GM12878 (cell line): ENCODE measurements at regions of chr10 and their contacts with region 1.

Region 1: GRCh38 chr10:62610649-62611229 is 193.8 kb upstream of the ADO start:
- DNase-seq: no peak
- ATAC-seq: peak; percentile 90
- H3K4me3 ChIP-seq: no peak overlapping the region
- H3K27ac ChIP-seq: no peak overlapping the region
- H3K4me1 ChIP-seq: peaks cover 30% of the 10 kb centered on the region
- H3K27me3 ChIP-seq: no peaks in the 10 kb centered on the region
- CTCF ChIP-seq: peak; percentile 90 to 99 (median 96)
- EP300 ChIP-seq: 0 out of 4 replicates have a peak, but pooled peaks have one; percentile 7 to 30
- POLR2A ChIP-seq: no peak
- RAD21 ChIP-seq: peak; percentile 99

Region 2: GRCh38 chr10:61708846-61709245 is 901.9 kb before region 1 on chr10:
- CTCF ChIA-PET with region 1: no interaction called
- POLR2A ChIA-PET with region 1: no interaction called
- RAD21 ChIA-PET with region 1: no interaction called
- SMC1A ChIA-PET with region 1: no interaction called
- in situ Hi-C with region 1: no loop called
- intact Hi-C with region 1: no loop called
- DNase-seq: no peak
- ATAC-seq: no peak
- H3K4me3 ChIP-seq: no peak overlapping the region
- H3K27ac ChIP-seq: no peak overlapping the region
- H3K4me1 ChIP-seq: no peaks in the 10 kb centered on the region
- H3K27me3 ChIP-seq: no peaks in the 10 kb centered on the region
- CTCF ChIP-seq: no peak
- EP300 ChIP-seq: no peak
- POLR2A ChIP-seq: no peak
- RAD21 ChIP-seq: no peak

Region 3: DNA sequence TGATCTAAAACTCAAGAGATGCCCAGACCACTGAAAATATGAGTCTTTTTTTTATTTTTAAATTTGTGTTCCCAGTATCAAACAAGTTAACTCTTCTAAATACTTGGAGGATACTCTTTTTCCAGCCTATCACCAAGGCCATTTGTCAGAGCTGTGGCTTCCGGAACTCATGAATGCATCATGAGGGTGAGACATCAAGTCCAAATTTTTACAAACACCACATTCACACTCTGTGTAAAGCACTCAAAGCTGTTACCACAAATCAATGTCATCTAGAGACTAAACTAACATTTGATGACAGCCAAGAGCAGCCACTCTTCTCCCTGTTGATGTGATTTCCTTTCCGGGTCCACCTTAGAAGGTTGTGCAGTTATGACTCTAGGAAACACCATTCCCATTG is 753.0 kb before region 1 on chr10:
- CTCF ChIA-PET with region 1: no interaction called
- POLR2A ChIA-PET with region 1: no interaction called
- RAD21 ChIA-PET with region 1: no interaction called
- SMC1A ChIA-PET with region 1: no interaction called
- in situ Hi-C with region 1: no loop called
- intact Hi-C with region 1: no loop called
- DNase-seq: no peak
- ATAC-seq: no peak
- H3K4me3 ChIP-seq: no peak overlapping the region
- H3K27ac ChIP-seq: no peak overlapping the region
- H3K4me1 ChIP-seq: no peaks in the 10 kb centered on the region
- H3K27me3 ChIP-seq: no peaks in the 10 kb centered on the region; a peak in 1 of 4 replicates
- CTCF ChIP-seq: no peak
- EP300 ChIP-seq: no peak
- POLR2A ChIP-seq: no peak
- RAD21 ChIP-seq: no peak

Region 4: DNA sequence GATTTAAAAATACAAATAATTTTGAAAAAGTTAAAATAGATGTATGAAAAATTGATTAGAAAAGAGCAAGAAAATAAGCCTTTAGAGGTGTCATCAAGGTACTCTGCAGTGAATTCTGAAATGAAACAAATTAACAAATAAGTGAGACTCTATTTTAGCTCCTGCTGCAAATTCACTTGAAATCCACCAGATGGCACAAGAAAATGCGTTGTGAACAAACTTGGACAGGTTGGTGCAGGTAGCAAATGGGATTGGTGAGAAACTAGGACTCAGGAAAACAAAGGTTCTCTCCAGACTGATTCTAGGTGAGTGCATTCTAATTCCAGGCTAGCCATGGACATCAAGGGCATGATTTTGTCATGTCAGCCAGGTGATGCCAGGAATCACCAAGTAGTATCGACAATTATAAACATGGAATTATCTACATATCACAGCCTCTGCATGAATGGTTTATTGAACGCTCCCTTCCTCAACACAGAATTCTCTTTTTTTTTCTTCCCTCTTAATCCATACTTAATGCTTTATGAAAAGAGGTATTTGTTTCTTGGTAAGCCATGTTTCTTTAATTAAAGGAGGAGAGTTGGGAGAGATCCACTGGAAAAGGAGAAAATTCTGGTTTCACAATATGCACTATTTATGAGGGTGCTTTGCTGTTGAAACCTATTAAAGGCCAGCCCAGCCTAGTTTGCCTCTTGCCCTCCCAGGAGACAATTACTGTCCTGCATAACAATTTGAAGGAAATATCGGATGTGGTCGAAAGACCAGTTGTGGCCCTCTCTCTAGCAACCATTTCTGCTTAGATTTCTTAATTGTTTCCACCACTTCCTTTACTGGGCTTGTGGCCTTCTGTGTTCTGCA is 118.5 kb before region 1 on chr10:
- CTCF ChIA-PET with region 1: interaction called, 22 read pairs
- POLR2A ChIA-PET with region 1: no interaction called
- RAD21 ChIA-PET with region 1: interaction called, 4 read pairs
- SMC1A ChIA-PET with region 1: interaction called, 15 read pairs
- in situ Hi-C with region 1: no loop called
- intact Hi-C with region 1: no loop called
- DNase-seq: peak; percentile 25
- ATAC-seq: peak; percentile 75
- H3K4me3 ChIP-seq: no peak overlapping the region
- H3K27ac ChIP-seq: no peak overlapping the region
- H3K4me1 ChIP-seq: no peaks in the 10 kb centered on the region
- H3K27me3 ChIP-seq: no peaks in the 10 kb centered on the region; a peak in 1 of 4 replicates
- CTCF ChIP-seq: peak; percentile 56 to 71 (median 71); a peak in 5 of 6 replicates
- EP300 ChIP-seq: no peak
- POLR2A ChIP-seq: no peak
- RAD21 ChIP-seq: peak; percentile 94

Region 5: GRCh38 chr10:62625484-62625883 is 14.7 kb after region 1 on chr10:
- CTCF ChIA-PET with region 1: interaction called, 16 read pairs
- POLR2A ChIA-PET with region 1: no interaction called
- RAD21 ChIA-PET with region 1: interaction called, 6 read pairs
- SMC1A ChIA-PET with region 1: interaction called, 15 read pairs
- in situ Hi-C with region 1: no loop called
- intact Hi-C with region 1: no loop called
- DNase-seq: no peak
- ATAC-seq: no peak
- H3K4me3 ChIP-seq: no peak overlapping the region
- H3K27ac ChIP-seq: no peak overlapping the region
- H3K4me1 ChIP-seq: peaks cover 3% of the 10 kb centered on the region
- H3K27me3 ChIP-seq: no peaks in the 10 kb centered on the region
- CTCF ChIP-seq: no peak
- EP300 ChIP-seq: no peak
- POLR2A ChIP-seq: no peak
- RAD21 ChIP-seq: no peak

Region 6: GRCh38 chr10:62647375-62648092 is 36.8 kb after region 1 on chr10:
- CTCF ChIA-PET with region 1: interaction called, 6 read pairs
- POLR2A ChIA-PET with region 1: no interaction called
- RAD21 ChIA-PET with region 1: interaction called, 4 read pairs
- SMC1A ChIA-PET with region 1: interaction called, 122 read pairs
- in situ Hi-C with region 1: no loop called
- intact Hi-C with region 1: no loop called
- DNase-seq: no peak
- ATAC-seq: peak; percentile 59
- H3K4me3 ChIP-seq: no peak overlapping the region
- H3K27ac ChIP-seq: no peak overlapping the region
- H3K4me1 ChIP-seq: peaks cover 29% of the 10 kb centered on the region
- H3K27me3 ChIP-seq: no peaks in the 10 kb centered on the region
- CTCF ChIP-seq: no peak
- EP300 ChIP-seq: peak; percentile 29 to 40; a peak in 1 of 4 replicates
- POLR2A ChIP-seq: no peak
- RAD21 ChIP-seq: no peak

Region 7: DNA sequence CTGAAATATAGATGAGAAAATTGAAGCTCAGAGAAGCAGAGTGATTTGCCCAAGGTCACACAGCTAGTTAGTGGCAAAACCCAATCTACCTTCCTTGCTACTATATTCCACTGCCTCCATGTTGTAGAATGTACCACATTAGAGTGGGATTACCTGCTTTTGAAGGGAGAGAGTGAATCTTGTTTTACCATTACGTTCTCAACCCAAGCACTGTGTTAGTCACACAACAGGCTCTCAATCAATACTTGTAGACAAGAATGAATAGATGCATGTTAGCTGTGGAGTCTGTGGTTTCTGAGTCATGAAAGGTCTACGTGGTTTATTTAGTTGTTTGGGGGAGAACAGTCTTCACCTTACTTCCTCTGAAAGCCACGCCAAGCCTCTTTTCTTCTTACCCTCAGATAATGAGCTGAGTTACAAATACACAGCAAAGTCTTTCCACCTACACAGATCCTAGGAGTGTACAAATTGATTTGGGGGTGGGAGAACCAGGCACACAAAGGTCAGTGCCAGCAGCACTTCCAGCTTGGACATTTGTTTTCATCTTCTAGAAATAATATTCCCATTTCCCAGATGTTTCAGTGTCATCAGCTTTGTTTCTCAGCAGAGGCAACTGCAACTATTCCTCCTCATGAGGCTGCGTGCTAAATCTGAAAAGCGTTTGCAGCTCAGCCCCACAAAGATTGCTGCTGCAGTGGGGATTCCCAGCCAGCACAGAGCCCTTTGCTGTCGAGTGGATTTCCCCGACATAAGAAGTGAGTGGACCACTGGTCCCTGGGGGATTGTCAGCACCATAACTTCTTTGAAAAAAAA is 122.3 kb after region 1 on chr10:
- CTCF ChIA-PET with region 1: interaction called, 48 read pairs
- POLR2A ChIA-PET with region 1: no interaction called
- RAD21 ChIA-PET with region 1: interaction called, 36 read pairs
- SMC1A ChIA-PET with region 1: interaction called, 70 read pairs
- in situ Hi-C with region 1: no loop called
- intact Hi-C with region 1: loop called (anchors 1 kb)
- DNase-seq: peak; percentile 94
- ATAC-seq: peak; percentile 83
- H3K4me3 ChIP-seq: peak overlapping the region; percentile 41; the same call in 1 of the 2 replicates
- H3K27ac ChIP-seq: peak overlapping the region; percentile 93
- H3K4me1 ChIP-seq: peaks cover 50% of the 10 kb centered on the region
- H3K27me3 ChIP-seq: no peaks in the 10 kb centered on the region
- CTCF ChIP-seq: no peak
- EP300 ChIP-seq: peak; percentile 83 to 87; a peak in 3 of 4 replicates
- POLR2A ChIP-seq: no peak; the same call in 1 of the 2 replicates
- RAD21 ChIP-seq: peak; percentile 38; the same call in 1 of the 2 replicates

Region 8: GRCh38 chr10:62779487-62780248 is 168.9 kb after region 1 on chr10:
- CTCF ChIA-PET with region 1: interaction called, 9 read pairs
- POLR2A ChIA-PET with region 1: no interaction called
- RAD21 ChIA-PET with region 1: interaction called, 12 read pairs
- SMC1A ChIA-PET with region 1: interaction called, 20 read pairs
- in situ Hi-C with region 1: no loop called
- intact Hi-C with region 1: no loop called
- DNase-seq: peak; percentile 84
- ATAC-seq: peak; percentile 96
- H3K4me3 ChIP-seq: no peak overlapping the region
- H3K27ac ChIP-seq: peak overlapping the region; percentile 75; the same call in 1 of the 2 replicates
- H3K4me1 ChIP-seq: peaks cover 23% of the 10 kb centered on the region
- H3K27me3 ChIP-seq: no peaks in the 10 kb centered on the region
- CTCF ChIP-seq: no peak
- EP300 ChIP-seq: peak; percentile 83 to 84
- POLR2A ChIP-seq: no peak
- RAD21 ChIP-seq: no peak

Region 9: DNA sequence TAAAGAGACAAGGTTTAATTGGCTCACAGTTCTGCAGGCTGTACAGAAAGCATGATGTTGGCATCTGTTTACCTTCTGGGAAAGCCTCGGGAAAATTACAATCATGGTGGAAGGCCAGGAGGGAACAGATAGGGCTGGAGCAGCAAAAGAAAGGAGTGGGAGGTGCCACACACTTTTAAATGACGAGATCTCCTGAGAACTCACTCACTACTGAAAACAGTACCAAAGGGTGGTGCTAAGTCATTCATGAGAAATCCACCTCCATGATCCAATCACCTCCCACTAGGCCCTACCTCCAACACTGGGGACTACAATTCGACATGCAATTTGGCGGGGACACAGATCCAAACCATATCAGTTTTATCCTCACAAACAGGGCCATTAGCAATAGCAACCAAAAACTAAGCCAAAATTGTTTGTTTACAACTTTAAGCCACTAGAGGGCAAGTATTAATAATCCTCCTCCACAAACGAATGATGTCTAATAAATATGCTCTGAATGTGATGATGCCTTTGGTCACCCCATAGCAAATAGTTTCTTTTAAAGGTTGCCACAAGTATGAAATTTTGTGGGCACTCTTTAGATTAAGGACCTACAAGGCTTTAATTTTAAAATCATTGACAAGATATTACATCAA is 393.2 kb after region 1 on chr10:
- CTCF ChIA-PET with region 1: interaction called, 5 read pairs
- POLR2A ChIA-PET with region 1: no interaction called
- RAD21 ChIA-PET with region 1: interaction called, 3 read pairs
- SMC1A ChIA-PET with region 1: interaction called, 7 read pairs
- in situ Hi-C with region 1: no loop called
- intact Hi-C with region 1: loop called (anchors 5 kb)
- DNase-seq: no peak
- ATAC-seq: peak; percentile 64; the same call in 2 of the 3 replicates
- H3K4me3 ChIP-seq: no peak overlapping the region
- H3K27ac ChIP-seq: no peak overlapping the region
- H3K4me1 ChIP-seq: no peaks in the 10 kb centered on the region
- H3K27me3 ChIP-seq: peaks cover 0 to 3% of the 10 kb centered on the region in 2 experiments; a peak in 1 of 4 replicates
- CTCF ChIP-seq: peak; percentile 28 to 53 (median 30); a peak in 4 of 6 replicates
- EP300 ChIP-seq: no peak
- POLR2A ChIP-seq: no peak
- RAD21 ChIP-seq: peak; percentile 38